ENCODE measurements at regions of chr19 and their contacts with region 1.

Region 1: DNA sequence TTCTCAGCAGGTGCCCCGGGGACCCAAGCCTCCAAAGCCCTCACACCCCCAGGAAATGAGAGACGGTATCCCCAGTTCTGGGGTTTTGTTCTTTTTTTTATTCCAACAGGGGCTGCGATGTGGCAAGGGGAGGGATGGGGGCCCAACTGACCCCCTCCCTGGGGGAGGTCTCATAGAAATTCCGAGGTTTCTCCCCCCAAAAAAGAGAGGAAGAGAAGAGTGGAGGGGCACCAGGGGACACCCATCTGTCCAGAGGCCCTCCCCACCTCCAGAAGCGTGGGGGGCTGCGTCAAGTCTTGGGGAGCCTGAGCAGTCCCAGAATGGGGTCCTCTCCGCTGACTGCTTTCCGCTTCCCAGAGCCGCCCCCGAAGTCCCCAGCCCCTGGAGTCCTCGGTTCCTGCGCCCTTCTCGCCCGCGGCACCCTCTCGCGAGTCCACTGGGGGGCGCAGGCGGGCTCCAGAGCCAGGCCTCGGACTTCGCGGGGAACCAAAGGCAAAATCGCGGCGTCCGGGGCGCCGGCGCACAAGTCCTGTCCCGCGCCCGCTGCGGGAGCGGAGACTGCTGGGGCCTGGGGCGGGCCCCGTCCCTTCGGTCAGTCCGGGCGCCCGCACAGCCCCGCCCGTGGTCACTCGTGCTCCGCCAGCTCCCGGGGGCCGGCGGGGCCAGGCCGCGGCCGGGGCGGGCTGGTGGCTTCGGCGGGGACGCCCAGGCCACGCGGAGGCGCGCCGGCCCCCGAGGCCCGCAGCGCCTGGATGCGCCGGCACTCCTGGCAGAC is 4.4 kb upstream of the ATP1A3 start:
- DNase-seq: no peak
- ATAC-seq: peak; percentile 63
- H3K4me3 ChIP-seq: peak overlapping the region in 1 of 2 experiments; percentile 13; a peak in 1 of 4 replicates
- H3K27ac ChIP-seq: no peak overlapping the region
- H3K4me1 ChIP-seq: no peaks in the 10 kb centered on the region
- H3K27me3 ChIP-seq: peaks cover 4% of the 10 kb centered on the region; the same call in 1 of the 2 replicates
- CTCF ChIP-seq: peak; percentile 88

Region 2: GRCh38 chr19:41844601-41845000 is 153.8 kb before region 1 on chr19 and contains the start of gene LYPD4:
- CTCF ChIA-PET with region 1: interaction called, 10 read pairs
- POLR2A ChIA-PET with region 1: no interaction called
- in situ Hi-C with region 1: no loop called
- intact Hi-C with region 1: no loop called
- DNase-seq: no peak
- ATAC-seq: no peak
- H3K4me3 ChIP-seq: no peak within 1 kb of the TSS
- H3K27ac ChIP-seq: no peak within 1 kb of the TSS
- H3K4me1 ChIP-seq: no peaks in the 10 kb centered on the region
- H3K27me3 ChIP-seq: no peaks in the 10 kb centered on the region
- CTCF ChIP-seq: no peak
- total RNA-seq, gene LYPD4: not detected

Region 3: GRCh38 chr19:41978470-41978869 is 20.0 kb before region 1 on chr19:
- CTCF ChIA-PET with region 1: no interaction called
- POLR2A ChIA-PET with region 1: no interaction called
- in situ Hi-C with region 1: no loop called
- intact Hi-C with region 1: no loop called
- DNase-seq: no peak
- ATAC-seq: no peak
- H3K4me3 ChIP-seq: no peak overlapping the region
- H3K27ac ChIP-seq: no peak overlapping the region
- H3K4me1 ChIP-seq: no peaks in the 10 kb centered on the region
- H3K27me3 ChIP-seq: no peaks in the 10 kb centered on the region
- CTCF ChIP-seq: no peak

Region 4: DNA sequence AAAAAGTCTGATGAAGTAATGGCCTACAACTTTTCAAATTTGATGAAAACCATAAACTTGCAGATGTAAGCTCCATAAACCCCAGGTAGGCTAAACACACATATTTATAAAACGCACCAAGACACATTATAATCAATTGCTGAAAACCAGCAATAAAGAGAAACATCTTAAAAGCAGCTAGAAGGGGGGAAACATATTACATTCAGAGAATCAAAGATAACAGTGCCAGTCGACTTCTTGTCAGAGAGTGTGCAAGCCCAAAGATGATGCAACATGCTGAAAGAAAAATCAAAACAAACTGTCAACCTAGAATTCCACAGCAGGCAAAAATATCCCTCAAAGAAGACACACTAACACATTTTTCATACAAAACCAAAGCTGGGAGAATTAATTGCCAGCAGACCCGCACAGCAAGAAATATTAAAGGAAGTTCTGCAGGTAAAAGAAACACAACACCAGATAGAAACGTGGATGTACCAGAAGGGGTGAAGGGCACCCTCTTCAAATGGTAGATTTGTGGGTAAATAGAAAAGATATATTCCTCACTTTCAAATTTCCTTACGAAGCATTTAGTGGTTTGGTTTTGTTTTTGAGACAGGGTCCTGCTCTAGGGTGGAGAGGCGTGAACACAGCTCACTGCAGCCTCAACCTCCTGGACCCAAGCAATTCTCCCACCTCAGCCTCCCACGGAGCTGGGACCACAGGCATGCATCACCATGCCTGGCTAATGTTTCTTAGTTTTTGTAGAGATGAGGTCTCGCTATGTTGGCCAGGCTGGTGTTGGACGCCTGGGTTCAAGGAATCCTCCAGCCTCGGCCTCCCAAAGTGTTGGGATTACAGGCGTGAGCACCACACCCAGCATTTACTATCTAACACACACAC is 12.1 kb after region 1 on chr19:
- CTCF ChIA-PET with region 1: no interaction called
- POLR2A ChIA-PET with region 1: interaction called, 10 read pairs
- in situ Hi-C with region 1: no loop called
- intact Hi-C with region 1: no loop called
- DNase-seq: no peak
- ATAC-seq: no peak
- H3K4me3 ChIP-seq: no peak overlapping the region
- H3K27ac ChIP-seq: peak overlapping the region; percentile 65; the same call in 1 of the 2 replicates
- H3K4me1 ChIP-seq: no peaks in the 10 kb centered on the region; the same call in 1 of the 2 replicates
- H3K27me3 ChIP-seq: no peaks in the 10 kb centered on the region
- CTCF ChIP-seq: no peak

Measured in Panc1 (cell line).